ENCODE measurements at regions of chr9 and their contacts with region 1.

Region 1: GRCh38 chr9:78035383-78035993 is 3.9 kb upstream of the GNAQ start:
- DNase-seq: peak; percentile 84
- H3K4me3 Mint-ChIP-seq: no peak overlapping the region
- H3K27ac Mint-ChIP-seq: no peak overlapping the region
- H3K4me1 Mint-ChIP-seq: peaks cover 16% of the 10 kb centered on the region
- H3K27me3 Mint-ChIP-seq: no peaks in the 10 kb centered on the region
- CTCF ChIP-seq: peak; percentile 62

Region 2: DNA sequence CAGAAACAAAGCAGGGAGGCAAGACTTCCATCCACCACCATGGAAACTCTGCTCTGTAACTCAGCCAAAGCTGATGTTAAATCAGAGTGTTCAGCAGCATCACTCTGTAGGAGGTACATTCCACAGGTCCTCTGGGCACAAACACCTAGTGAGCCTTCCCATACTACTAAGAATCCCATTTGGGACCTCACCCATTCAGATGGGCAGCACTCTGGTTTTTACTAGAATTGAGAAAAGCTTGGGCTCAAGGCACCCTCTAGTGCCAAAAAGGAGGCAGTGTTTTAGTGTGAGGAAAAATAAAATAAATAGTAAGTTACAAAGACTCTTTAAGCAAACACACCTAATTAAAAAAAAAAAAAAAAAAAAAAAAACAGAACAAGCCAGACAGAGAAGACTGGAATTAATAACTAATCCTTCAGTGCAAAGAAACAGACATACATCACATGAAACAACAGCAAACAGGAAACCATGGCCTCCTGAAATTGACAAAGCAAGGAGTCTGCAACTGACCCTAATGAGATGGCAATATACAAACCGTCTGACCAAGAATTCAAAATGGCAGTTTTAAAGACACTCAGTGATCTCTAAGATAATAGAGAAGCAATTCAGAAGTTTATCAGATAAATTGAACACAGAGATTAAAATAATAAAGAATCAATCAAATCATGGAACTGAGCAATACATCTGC is 546.9 kb before region 1 on chr9:
- CTCF ChIA-PET with region 1: no interaction called
- POLR2A ChIA-PET with region 1: no interaction called
- intact Hi-C with region 1: loop called (anchors 5 kb)
- DNase-seq: peak; percentile 41
- H3K4me3 Mint-ChIP-seq: no peak overlapping the region
- H3K27ac Mint-ChIP-seq: no peak overlapping the region
- H3K4me1 Mint-ChIP-seq: no peaks in the 10 kb centered on the region
- H3K27me3 Mint-ChIP-seq: no peaks in the 10 kb centered on the region
- CTCF ChIP-seq: peak; percentile 41

Region 3: DNA sequence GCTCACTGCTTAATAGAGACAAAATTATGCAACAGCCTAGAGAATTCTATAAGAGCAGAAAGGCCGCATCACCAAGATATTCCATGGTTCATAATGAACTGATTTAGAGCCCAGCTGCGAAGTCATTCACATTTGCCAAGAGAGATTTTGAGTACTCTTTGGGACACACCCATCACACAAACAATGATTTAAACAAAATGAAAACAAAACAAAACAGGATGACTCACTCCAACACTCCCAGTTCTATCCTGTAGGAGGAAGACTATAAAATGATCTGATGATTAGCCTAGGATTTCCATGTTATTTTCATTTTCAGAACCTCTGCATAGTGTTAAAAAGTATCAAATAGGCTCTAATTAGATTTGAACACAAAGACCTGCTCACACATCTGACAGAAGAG is 241.6 kb before region 1 on chr9:
- CTCF ChIA-PET with region 1: interaction called, 6 read pairs
- POLR2A ChIA-PET with region 1: interaction called, 3 read pairs
- intact Hi-C with region 1: loop called (anchors 10 kb)
- DNase-seq: peak; percentile 70
- H3K4me3 Mint-ChIP-seq: peak overlapping the region; percentile 24
- H3K27ac Mint-ChIP-seq: peak overlapping the region; percentile 86
- H3K4me1 Mint-ChIP-seq: peaks cover 18% of the 10 kb centered on the region
- H3K27me3 Mint-ChIP-seq: no peaks in the 10 kb centered on the region
- CTCF ChIP-seq: peak; percentile 28

Region 4: DNA sequence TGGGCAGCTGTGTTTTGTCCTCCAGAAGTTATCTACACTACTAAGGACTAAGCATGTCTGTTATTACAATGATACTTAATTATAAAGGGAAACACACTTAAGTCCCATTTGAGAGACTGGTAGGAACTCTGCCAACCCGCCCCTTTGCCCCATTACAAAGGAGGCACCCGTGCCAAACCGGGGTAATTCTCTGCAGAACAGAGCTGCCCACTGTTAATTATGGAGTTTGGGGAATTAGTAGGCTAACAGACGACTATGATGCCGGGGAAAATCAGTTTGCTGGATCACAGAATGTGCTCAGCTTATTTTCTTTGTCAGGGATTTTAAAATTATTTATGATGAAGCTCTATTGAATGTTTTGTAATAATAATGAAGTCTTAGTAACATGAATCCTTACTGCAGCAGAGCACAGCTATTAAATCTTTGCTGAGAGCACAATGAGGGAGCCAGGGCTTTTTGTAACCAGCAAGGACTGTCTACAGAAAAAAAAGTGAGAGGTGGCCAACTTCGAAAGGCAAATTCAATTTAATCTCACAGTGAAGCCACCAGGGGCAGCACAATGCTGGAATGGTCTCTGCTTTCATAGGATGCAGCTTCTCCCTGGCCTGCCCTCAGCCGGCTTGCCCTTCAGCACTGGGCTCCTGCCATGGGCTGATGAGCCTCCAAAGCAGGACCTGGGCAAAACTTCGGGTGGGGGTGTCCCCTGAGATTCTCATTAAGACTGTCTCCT is 138.4 kb before region 1 on chr9:
- CTCF ChIA-PET with region 1: interaction called, 10 read pairs
- POLR2A ChIA-PET with region 1: no interaction called
- intact Hi-C with region 1: no loop called
- DNase-seq: no peak
- H3K4me3 Mint-ChIP-seq: no peak overlapping the region
- H3K27ac Mint-ChIP-seq: no peak overlapping the region
- H3K4me1 Mint-ChIP-seq: peaks cover 6% of the 10 kb centered on the region
- H3K27me3 Mint-ChIP-seq: no peaks in the 10 kb centered on the region
- CTCF ChIP-seq: no peak

Region 5: GRCh38 chr9:78046112-78046511 is 10.6 kb after region 1 on chr9:
- CTCF ChIA-PET with region 1: interaction called, 37 read pairs
- POLR2A ChIA-PET with region 1: interaction called, 8 read pairs
- intact Hi-C with region 1: no loop called
- DNase-seq: no peak
- H3K4me3 Mint-ChIP-seq: no peak overlapping the region
- H3K27ac Mint-ChIP-seq: no peak overlapping the region
- H3K4me1 Mint-ChIP-seq: no peaks in the 10 kb centered on the region
- H3K27me3 Mint-ChIP-seq: peaks cover 12% of the 10 kb centered on the region
- CTCF ChIP-seq: no peak

Region 6: DNA sequence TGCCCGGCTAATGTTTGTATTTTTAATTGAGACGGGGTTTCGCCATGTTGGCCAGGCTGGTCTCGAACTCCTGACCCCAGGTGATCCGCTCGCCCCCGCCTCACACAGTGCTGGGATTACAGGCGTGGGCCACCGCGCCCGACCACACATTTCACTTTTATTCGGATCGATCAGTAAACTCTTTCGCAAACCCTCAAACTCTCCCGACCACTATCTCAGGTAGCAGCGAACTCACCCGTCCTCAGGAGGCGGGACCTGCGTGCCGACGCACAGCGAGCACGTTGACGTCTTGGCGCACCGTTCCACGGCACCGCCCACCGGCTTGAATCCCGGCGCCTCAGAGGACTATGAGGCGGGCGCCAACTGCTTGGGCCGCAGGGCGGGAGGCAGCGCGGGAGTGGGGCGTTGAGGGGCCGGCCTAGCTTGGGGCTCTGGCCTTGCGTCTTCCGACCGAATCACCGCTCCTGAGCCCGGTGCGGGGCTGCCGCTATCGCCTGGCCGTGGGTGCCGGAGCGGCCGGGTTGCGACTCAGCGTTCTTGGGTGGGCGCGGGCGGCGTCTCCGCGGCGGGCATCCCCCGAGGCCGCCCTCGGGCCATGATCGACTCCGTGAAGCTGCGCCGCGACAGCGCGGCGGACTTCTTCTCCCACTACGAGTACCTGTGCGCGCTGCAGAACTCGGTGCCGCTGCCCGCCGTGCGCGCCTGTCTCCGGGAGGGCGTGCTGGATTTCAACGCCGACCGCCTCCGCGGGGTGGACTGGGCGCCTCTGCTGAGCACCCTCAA is 200.5 kb after region 1 on chr9 and contains the start of gene CEP78:
- CTCF ChIA-PET with region 1: interaction called, 8 read pairs
- POLR2A ChIA-PET with region 1: no interaction called
- intact Hi-C with region 1: loop called (anchors 10 kb)
- DNase-seq: peak; percentile 93
- H3K4me3 Mint-ChIP-seq: peak within 1 kb of the TSS; percentile 93
- H3K27ac Mint-ChIP-seq: peak within 1 kb of the TSS; percentile 96
- H3K4me1 Mint-ChIP-seq: peaks cover 16% of the 10 kb centered on the region
- H3K27me3 Mint-ChIP-seq: no peaks in the 10 kb centered on the region
- CTCF ChIP-seq: no peak
- total RNA-seq, gene CEP78: 13.7 and 17.8 TPM in 2 replicates